Posterior cingulate gyrus (tissue), 11 donors: ENCODE measurements at regions of chr2 and their contacts with region 1.

Region 1: GRCh38 chr2:58448065-58448507 is 207.0 kb upstream of the FANCL start:
- DNase-seq: peak in 7 of 10 donors; percentile 53 to 93 (median 75)

Region 2: GRCh38 chr2:57674743-57675420 is 773.2 kb before region 1 on chr2:
- intact Hi-C with region 1: no loop called
- DNase-seq: no peak

Region 3: GRCh38 chr2:57759822-57760300 is 688.2 kb before region 1 on chr2:
- intact Hi-C with region 1: loop called (anchors 1 kb)
- DNase-seq: peak; percentile 84 to 99 (median 95)

Region 4: GRCh38 chr2:58407487-58407886 is 40.6 kb before region 1 on chr2:
- intact Hi-C with region 1: no loop called
- DNase-seq: no peak

Region 5: GRCh38 chr2:58553937-58554336 is 105.9 kb after region 1 on chr2:
- intact Hi-C with region 1: loop called (anchors 5 kb)
- DNase-seq: peak in 6 of 10 donors; percentile 22 to 88 (median 51)